Thyroid gland (tissue), 4 donors: ENCODE measurements at regions of chr14 and their contacts with region 1.

Region 1: GRCh38 chr14:101635749-101636560 is 74.7 kb downstream of the DIO3 start:
- DNase-seq: no peak
- H3K4me3 ChIP-seq: no peak overlapping the region
- H3K27ac ChIP-seq: no peak overlapping the region
- H3K4me1 ChIP-seq: no peaks in the 10 kb centered on the region
- H3K27me3 ChIP-seq: no peaks in the 10 kb centered on the region
- CTCF ChIP-seq: no peak
- POLR2A ChIP-seq: no peak

Region 2: DNA sequence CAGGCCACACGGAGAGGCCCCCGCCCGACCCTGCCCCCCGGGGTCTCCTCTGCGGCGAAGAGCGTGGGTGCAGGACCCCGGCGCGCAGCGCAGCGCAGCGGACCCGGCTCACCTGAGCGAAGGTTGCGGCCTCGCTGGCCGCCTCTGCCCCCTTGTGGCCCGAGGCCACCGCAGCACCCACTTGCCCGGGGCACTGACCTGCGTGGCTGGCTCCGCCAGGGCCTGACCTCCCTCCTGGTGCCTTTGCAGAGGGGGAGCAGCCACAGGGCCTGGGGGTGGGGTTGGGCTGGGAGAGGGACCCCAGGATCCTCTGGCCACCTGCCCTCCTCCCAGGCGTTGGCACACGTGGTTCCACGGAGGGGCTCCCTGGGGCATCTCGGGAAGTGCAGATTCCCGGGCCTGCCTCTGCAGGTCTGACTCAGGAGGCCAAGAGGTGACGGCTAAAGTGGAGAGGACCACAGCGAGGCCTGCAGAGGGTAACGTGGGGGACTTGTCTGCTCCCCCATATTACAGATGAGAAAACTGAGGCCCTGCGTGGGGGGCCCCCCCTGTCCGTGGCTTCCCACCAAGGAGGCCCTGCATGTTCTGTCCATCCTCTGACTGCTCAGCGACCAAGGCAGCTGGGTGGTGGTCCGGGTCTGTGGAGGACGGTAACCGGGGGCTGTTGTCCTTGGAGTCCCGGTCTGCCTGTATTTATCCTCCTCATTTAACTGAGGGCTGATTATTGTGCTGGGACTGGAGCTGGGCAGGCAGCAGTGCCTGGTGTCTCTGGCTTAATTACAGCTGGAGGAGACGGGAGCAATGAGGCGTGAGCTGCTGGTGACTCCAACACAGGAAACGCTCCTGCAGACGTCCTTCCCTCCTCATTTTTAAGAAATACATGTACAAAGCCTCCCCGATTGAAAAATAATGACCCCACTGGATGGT is 980.9 kb before region 1 on chr14:
- intact Hi-C with region 1: loop called (anchors 10 kb)
- DNase-seq: peak; percentile 37 to 44
- H3K4me3 ChIP-seq: no peak overlapping the region
- H3K27ac ChIP-seq: no peak overlapping the region
- H3K4me1 ChIP-seq: no peaks in the 10 kb centered on the region
- H3K27me3 ChIP-seq: no peaks in the 10 kb centered on the region
- CTCF ChIP-seq: peak in 5 of 6 experiments; percentile 26 to 66 (median 44)
- POLR2A ChIP-seq: no peak

Region 3: GRCh38 chr14:101442451-101442850 is 193.5 kb before region 1 on chr14:
- intact Hi-C with region 1: no loop called
- DNase-seq: no peak
- H3K4me3 ChIP-seq: no peak overlapping the region
- H3K27ac ChIP-seq: no peak overlapping the region
- H3K4me1 ChIP-seq: no peaks in the 10 kb centered on the region
- H3K27me3 ChIP-seq: no peaks in the 10 kb centered on the region
- CTCF ChIP-seq: no peak
- POLR2A ChIP-seq: no peak